ENCODE measurements at regions of chr3 and their contacts with region 1.

Region 1: GRCh38 chr3:127831723-127832172 is 9.4 kb upstream of the MGLL start:
- DNase-seq: peak in 4 of 5 donors; percentile 52 to 79 (median 58)
- ATAC-seq: peak in 3 of 4 donors; percentile 59 to 78 (median 63)
- H3K4me3 ChIP-seq: no peak overlapping the region
- H3K27ac ChIP-seq: no peak overlapping the region
- H3K4me1 ChIP-seq: no peaks in the 10 kb centered on the region
- H3K27me3 ChIP-seq: no peaks in the 10 kb centered on the region
- CTCF ChIP-seq: peak; percentile 64 to 81 (median 72)
- POLR2A ChIP-seq: no peak

Region 2: DNA sequence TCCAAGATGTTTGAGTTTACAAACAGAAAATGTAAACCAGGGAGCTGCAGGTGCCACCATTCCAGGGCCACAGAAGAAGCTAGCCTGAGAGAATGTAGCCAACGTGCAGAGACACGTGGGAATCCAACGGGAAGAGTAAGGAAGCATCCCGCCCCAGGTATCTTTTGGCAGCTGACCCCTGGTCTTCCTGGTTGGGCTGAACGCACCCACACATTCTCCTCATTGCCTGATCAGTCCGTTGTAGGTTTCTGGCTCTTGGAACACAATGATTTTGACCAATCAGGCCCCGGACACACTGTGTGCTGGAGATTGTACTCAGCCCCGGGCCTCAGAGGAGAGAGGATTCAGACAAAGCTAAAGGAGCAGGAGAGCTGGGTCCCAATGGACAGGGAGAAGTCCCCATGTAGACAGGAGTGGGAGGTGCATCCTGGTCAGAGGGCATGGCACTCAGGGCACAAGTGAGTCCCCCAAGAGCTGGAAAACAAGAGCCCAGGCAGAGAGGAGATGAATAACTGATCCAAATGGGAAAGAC is 343.5 kb before region 1 on chr3:
- intact Hi-C with region 1: no loop called
- DNase-seq: no peak
- ATAC-seq: no peak
- H3K4me3 ChIP-seq: no peak overlapping the region
- H3K27ac ChIP-seq: no peak overlapping the region
- H3K4me1 ChIP-seq: peaks cover 0 to 5% (median 0%) of the 10 kb centered on the region in 12 donors
- H3K27me3 ChIP-seq: no peaks in the 10 kb centered on the region
- CTCF ChIP-seq: no peak
- POLR2A ChIP-seq: no peak

Region 3: GRCh38 chr3:127574880-127575878 is 256.6 kb before region 1 on chr3:
- intact Hi-C with region 1: loop called in 4 of 10 experiments (anchors 5 to 10 kb)
- DNase-seq: peak; percentile 81 to 91 (median 84)
- ATAC-seq: peak; percentile 36 to 85 (median 78)
- H3K4me3 ChIP-seq: no peak overlapping the region
- H3K27ac ChIP-seq: no peak overlapping the region
- H3K4me1 ChIP-seq: peaks cover 0 to 22% (median 7%) of the 10 kb centered on the region in 12 donors
- H3K27me3 ChIP-seq: no peaks in the 10 kb centered on the region
- CTCF ChIP-seq: peak; percentile 95 to 98 (median 98)
- POLR2A ChIP-seq: no peak

Region 4: GRCh38 chr3:127690823-127691452 is 140.8 kb before region 1 on chr3:
- intact Hi-C with region 1: loop called in 2 of 10 experiments (anchors 5 kb)
- DNase-seq: peak in 2 of 5 donors; percentile 56 to 73
- ATAC-seq: peak; percentile 55 to 72 (median 64)
- H3K4me3 ChIP-seq: no peak overlapping the region
- H3K27ac ChIP-seq: peak overlapping the region in 11 of 12 donors; percentile 8 to 70 (median 52)
- H3K4me1 ChIP-seq: peaks cover 0 to 60% (median 21%) of the 10 kb centered on the region in 12 donors
- H3K27me3 ChIP-seq: no peaks in the 10 kb centered on the region
- CTCF ChIP-seq: peak; percentile 29 to 68 (median 46)
- POLR2A ChIP-seq: no peak

Measured in heart left ventricle (tissue), 16 donors.